Tibial artery (tissue), 4 donors: ENCODE measurements at regions of chr6 and their contacts with region 1.

Region 1: DNA sequence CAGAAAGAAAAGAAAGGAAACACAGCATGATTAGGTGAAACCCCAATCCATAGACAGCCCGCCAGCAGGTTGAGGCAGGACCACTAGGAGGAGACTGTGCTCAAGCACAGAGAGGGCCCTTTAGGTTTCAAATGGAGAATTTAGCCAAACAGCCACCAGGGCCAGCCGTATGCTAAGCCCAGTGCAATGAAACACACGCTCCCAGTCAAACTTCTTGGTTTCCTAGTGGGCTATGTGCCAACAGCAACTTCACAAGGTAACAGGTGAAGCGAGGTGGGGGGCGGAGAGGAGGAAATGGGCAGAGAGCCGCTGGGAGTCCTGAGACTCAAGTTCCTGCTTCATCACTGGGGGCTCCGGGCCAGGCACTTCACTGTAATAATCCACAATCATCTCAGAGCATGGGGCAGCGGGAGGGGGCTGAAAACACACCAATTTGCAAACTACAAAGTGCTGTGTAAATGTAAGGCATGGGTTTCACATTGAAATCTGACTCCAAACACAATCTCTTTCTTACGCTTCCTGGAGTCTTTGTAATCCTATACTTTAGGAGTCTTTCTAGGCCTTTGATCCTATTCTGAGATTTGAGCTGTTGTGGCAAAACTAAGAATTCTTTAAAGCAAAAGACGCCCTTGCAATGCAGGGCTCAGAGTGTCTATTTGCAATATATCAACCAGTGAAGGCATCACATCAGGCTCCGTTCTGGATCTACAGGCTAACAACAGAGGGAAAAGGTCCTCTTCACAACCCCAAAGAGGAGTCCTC is 117.3 kb downstream of the OPRM1 start:
- DNase-seq: no peak
- H3K4me3 ChIP-seq: no peak overlapping the region
- H3K27ac ChIP-seq: no peak overlapping the region
- H3K4me1 ChIP-seq: no peaks in the 10 kb centered on the region
- H3K27me3 ChIP-seq: no peaks in the 10 kb centered on the region
- CTCF ChIP-seq: peak; percentile 14 to 34

Region 2: GRCh38 chr6:154095571-154095970 is 60.7 kb before region 1 on chr6:
- intact Hi-C with region 1: no loop called
- DNase-seq: no peak
- H3K4me3 ChIP-seq: no peak overlapping the region
- H3K27ac ChIP-seq: no peak overlapping the region
- H3K4me1 ChIP-seq: no peaks in the 10 kb centered on the region
- H3K27me3 ChIP-seq: no peaks in the 10 kb centered on the region
- CTCF ChIP-seq: no peak

Region 3: GRCh38 chr6:154274168-154274567 is 117.9 kb after region 1 on chr6:
- intact Hi-C with region 1: loop called (anchors 2 kb)
- DNase-seq: no peak
- H3K4me3 ChIP-seq: no peak overlapping the region
- H3K27ac ChIP-seq: no peak overlapping the region
- H3K4me1 ChIP-seq: peaks cover 0 to 12% (median 0%) of the 10 kb centered on the region in 4 donors
- H3K27me3 ChIP-seq: no peaks in the 10 kb centered on the region
- CTCF ChIP-seq: no peak

Region 4: DNA sequence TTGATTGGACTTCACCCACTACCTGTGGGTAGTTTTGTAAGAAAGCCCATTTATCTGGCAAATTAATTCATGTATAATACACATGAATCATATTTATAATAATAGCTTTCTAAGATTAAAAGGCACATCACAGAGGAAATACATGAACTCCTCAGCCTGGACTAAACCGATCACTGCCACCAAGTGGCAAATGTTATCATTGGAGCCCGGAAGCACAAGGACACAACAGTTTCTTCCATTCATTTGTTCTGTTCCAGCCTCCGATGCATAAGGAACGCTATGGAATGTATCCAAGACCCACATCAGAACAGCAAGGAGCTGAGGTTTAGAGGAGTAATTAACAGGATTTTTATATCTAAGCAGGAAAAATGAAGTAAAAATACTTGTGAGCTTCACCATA is 214.2 kb after region 1 on chr6:
- intact Hi-C with region 1: loop called (anchors 10 kb)
- DNase-seq: no peak
- H3K4me3 ChIP-seq: no peak overlapping the region
- H3K27ac ChIP-seq: no peak overlapping the region
- H3K4me1 ChIP-seq: no peaks in the 10 kb centered on the region
- H3K27me3 ChIP-seq: no peaks in the 10 kb centered on the region
- CTCF ChIP-seq: peak in 1 of 2 experiments; percentile 28

Region 5: DNA sequence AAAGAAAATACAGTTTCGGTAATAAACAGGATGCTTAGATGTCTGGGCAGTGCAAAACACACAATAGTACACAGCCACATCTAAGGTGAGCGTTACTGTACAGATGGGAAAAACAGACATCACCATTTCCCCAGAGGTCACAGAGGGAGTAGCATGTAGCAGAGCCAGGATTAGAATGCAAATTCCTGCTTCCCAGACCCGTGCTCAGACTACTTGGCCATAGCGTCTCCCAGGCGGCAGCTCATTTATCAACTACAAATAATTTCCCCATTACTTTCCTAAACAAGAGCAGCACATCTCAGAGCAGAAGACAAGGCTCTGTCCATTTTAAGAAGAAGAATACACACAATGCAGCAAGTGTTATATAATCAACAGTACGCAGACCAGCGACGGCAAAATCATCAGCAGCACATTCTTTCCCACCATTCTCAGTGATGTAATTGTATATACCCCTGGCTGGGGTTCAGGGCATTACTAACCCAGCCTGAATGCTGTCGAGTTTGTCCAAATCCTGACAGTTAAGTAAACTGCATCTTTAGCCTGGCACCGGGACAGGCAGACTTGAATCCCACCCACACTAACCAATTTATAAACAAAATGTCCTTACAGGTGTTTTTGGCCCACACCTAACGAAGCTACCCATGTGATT is 292.3 kb after region 1 on chr6:
- intact Hi-C with region 1: no loop called
- DNase-seq: no peak
- H3K4me3 ChIP-seq: peak overlapping the region; percentile 13 to 26
- H3K27ac ChIP-seq: peak overlapping the region; percentile 48 to 65
- H3K4me1 ChIP-seq: peaks cover 5 to 45% (median 15%) of the 10 kb centered on the region in 4 donors
- H3K27me3 ChIP-seq: no peaks in the 10 kb centered on the region
- CTCF ChIP-seq: peak; percentile 38 to 44

Region 6: DNA sequence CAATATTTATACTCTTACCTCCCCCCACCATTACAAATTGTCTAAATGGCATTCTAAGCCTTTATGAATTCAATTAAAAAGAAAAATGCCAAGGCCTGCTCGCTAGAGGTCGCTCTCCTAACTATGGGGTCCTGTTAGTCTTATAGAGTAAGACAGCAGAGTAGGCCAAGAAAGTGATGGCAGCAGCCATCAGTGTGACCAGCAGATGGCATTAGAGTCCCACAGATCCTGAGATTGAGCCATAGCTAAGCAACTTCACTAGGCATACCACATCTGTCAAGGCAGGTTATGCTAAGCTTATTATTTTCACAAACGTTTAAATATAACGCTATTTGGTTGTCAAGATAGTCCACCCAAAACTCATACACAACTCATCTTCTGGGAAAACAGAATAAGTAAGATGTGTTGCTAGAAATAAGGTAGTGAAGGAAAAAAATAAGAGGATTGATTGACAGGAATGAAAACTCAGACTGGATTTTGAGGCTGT is 519.3 kb after region 1 on chr6:
- intact Hi-C with region 1: loop called (anchors 10 kb)
- DNase-seq: peak; percentile 91 to 93
- H3K4me3 ChIP-seq: no peak overlapping the region
- H3K27ac ChIP-seq: no peak overlapping the region
- H3K4me1 ChIP-seq: no peaks in the 10 kb centered on the region
- H3K27me3 ChIP-seq: no peaks in the 10 kb centered on the region
- CTCF ChIP-seq: peak; percentile 99